HepG2 (cell line): ENCODE measurements at regions of chr17 and their contacts with region 1.

Region 1: DNA sequence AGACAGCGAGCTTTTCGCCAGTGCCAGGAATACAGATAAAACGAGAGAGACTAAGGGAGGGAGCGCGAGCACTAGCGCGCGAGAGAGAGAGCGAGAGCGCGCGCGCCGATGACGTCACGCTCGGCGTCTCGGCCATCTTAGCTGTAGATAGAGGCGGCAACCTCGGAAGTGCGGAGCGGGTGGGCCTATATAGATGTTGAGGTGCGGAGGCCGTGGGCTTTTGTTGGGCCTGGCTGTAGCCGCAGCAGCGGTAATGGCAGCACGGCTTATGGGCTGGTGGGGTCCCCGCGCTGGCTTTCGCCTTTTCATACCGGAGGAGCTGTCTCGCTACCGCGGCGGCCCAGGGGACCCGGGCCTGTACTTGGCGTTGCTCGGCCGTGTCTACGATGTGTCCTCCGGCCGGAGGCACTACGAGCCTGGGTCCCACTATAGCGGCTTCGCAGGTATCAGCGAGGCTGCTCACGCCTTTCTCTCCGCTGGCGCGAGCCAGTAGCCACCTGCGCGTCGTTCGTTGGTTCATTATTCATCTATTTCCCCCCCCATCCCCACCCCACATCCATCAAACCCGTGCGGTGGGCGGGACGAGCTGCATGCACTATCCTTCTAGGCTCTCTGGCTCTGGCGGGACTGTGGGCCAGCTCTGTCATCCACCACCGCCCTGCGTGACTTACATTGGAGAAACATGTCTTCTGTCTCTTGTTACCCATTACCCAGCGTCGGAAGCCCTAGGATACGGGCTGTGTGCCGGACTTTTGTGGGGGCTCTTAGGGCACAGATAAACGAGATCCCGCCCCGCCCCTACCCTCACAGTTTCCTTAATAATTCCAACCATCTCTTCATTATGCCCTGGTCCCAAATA is 795 bp downstream of the CYB5D2 start:
- DNase-seq: peak; percentile 82
- ATAC-seq: peak; percentile 85
- H3K4me3 ChIP-seq: peak overlapping the region; percentile 81 to 94 (median 83)
- H3K27ac ChIP-seq: peak overlapping the region; percentile 95
- H3K4me1 ChIP-seq: peaks cover 38% of the 10 kb centered on the region
- H3K27me3 ChIP-seq: no peaks in the 10 kb centered on the region; a peak in 1 of 5 replicates
- CTCF ChIP-seq: no peak
- EP300 ChIP-seq: no peak
- POLR2A ChIP-seq: peak; percentile 84 to 88
- RAD21 ChIP-seq: no peak

Region 2: GRCh38 chr17:3852561-3852960 is 291.2 kb before region 1 on chr17:
- CTCF ChIA-PET with region 1: no interaction called
- POLR2A ChIA-PET with region 1: no interaction called
- in situ Hi-C with region 1: no loop called
- intact Hi-C with region 1: no loop called
- DNase-seq: no peak
- ATAC-seq: no peak
- H3K4me3 ChIP-seq: no peak overlapping the region
- H3K27ac ChIP-seq: no peak overlapping the region
- H3K4me1 ChIP-seq: peaks cover 24% of the 10 kb centered on the region
- H3K27me3 ChIP-seq: 0 out of 5 replicates have a peak, but pooled peaks cover 0 to 2% of the 10 kb centered on the region in 2 experiments
- CTCF ChIP-seq: no peak
- EP300 ChIP-seq: no peak
- POLR2A ChIP-seq: no peak
- RAD21 ChIP-seq: no peak

Region 3: DNA sequence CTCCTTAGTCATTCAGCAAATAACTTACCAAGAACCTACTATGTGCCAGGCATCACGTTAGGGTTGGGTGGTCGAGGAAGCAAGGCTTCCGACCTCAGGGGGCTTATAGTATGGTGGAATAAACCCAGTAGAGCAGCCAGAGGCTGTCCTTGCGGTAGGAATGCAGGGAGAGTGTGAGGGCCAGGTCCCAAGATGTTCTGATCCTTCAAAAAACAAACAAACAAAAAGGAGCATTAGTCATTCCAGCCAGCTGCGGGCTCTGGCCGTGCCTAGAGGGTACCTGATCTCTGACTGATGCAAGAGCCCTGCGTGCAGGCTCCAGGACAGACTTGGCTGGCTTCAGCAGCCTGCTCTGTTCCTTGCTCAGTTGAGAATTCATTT is 17.4 kb after region 1 on chr17:
- CTCF ChIA-PET with region 1: no interaction called
- POLR2A ChIA-PET with region 1: interaction called, 23 read pairs
- in situ Hi-C with region 1: no loop called
- intact Hi-C with region 1: no loop called
- DNase-seq: peak; percentile 10
- ATAC-seq: peak; percentile 26; the same call in 2 of the 3 replicates
- H3K4me3 ChIP-seq: no peak overlapping the region
- H3K27ac ChIP-seq: no peak overlapping the region
- H3K4me1 ChIP-seq: 0 out of 2 replicates have a peak, but pooled peaks cover 5% of the 10 kb centered on the region
- H3K27me3 ChIP-seq: no peaks in the 10 kb centered on the region
- CTCF ChIP-seq: no peak
- EP300 ChIP-seq: no peak
- POLR2A ChIP-seq: no peak
- RAD21 ChIP-seq: no peak